Caco-2 (cell line): ENCODE measurements at regions of chr20 and their contacts with region 1.

Region 1: DNA sequence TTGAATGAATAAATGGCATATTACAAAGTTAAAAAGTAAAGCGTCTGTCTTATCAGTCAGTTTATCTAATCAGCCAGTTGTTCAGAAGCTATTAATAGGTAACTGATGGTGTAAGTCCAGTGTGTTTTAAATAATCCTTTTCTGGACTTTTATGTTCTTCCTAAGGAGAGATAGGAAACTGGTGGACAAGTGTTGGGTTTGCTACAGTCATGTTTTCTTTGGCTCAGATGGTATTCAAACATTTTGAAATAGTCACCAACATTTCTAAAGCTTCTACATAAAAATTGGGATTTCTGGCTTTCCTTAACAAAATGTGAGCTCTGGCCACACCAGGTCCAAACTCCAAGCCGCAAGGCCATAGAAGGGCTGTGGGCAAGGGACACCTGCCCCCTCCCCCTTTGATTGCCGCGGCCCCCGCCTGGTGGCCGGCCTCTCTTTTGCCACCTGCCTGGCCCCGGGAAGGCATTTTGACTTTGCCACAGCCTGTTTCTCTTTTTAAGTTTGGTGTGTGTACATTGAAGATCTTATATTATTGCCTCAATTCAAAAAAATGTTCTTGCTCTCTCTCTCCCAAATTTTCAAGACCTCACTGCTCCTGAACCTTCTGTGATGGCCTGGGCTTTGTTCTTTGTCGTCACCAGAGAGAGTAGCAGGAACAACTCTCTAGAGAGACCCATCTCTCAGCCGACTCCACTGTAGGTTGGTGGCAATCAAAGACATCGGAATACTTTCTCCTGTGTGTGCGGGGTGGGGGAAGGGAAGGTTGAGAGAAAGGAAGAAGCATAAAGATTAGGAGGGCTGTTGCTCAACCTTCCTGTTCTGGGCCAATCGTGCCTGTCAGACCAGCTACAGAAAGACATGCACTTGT is 84.0 kb upstream of the ZNF217 start:
- DNase-seq: peak; percentile 97 to 99
- H3K4me3 ChIP-seq: peak overlapping the region; percentile 2; the same call in 1 of the 2 replicates
- H3K4me3 Mint-ChIP-seq: peak overlapping the region; percentile 73
- H3K27ac Mint-ChIP-seq: peak overlapping the region; percentile 88
- H3K4me1 ChIP-seq: peaks cover 52% of the 10 kb centered on the region
- H3K4me1 Mint-ChIP-seq: peaks cover 43% of the 10 kb centered on the region
- H3K27me3 ChIP-seq: no peaks in the 10 kb centered on the region
- H3K27me3 Mint-ChIP-seq: no peaks in the 10 kb centered on the region
- CTCF ChIP-seq: peak; percentile 76 to 84

Region 2: DNA sequence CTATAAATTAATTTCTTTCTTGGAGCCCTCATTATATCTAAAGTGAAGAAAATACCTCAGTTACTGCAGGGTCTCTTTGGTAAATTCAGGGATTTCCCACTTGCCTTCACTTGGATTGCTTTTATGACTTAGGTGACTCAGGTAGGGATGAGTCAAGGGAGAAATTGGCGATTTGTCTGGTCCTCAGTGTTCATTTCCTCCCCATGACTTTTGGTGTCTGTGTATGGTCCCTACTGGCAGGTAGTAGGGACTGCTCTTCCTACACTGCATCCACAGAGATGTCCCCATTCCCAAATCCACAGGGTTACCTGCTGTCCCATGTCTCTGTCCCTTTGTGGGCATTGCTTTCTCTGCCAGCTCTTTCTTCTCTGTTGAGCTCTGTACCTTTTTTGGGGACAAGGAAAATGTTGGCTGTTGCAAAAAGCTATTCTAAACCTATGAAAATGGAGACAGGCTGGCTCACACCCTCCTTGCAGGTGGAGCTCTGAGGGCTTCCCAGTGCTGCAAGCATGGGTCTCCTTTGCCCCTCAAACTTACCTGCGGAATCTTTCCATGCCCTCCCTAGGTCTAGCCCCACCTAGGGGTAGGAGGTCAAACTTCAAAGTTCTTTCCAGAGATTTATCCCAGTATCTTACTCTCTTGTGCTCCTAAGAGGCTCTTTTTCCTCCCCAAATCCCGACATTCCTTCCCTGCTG is 296.0 kb before region 1 on chr20:
- CTCF ChIA-PET with region 1: no interaction called
- POLR2A ChIA-PET with region 1: no interaction called
- intact Hi-C with region 1: no loop called
- DNase-seq: peak in 1 of 2 experiments; percentile 28
- H3K4me3 ChIP-seq: no peak overlapping the region
- H3K4me3 Mint-ChIP-seq: no peak overlapping the region
- H3K27ac Mint-ChIP-seq: no peak overlapping the region
- H3K4me1 ChIP-seq: no peaks in the 10 kb centered on the region
- H3K4me1 Mint-ChIP-seq: no peaks in the 10 kb centered on the region
- H3K27me3 ChIP-seq: no peaks in the 10 kb centered on the region; the same call in 1 of the 2 replicates
- H3K27me3 Mint-ChIP-seq: peaks cover 4% of the 10 kb centered on the region
- CTCF ChIP-seq: peak; percentile 18 to 35

Region 3: DNA sequence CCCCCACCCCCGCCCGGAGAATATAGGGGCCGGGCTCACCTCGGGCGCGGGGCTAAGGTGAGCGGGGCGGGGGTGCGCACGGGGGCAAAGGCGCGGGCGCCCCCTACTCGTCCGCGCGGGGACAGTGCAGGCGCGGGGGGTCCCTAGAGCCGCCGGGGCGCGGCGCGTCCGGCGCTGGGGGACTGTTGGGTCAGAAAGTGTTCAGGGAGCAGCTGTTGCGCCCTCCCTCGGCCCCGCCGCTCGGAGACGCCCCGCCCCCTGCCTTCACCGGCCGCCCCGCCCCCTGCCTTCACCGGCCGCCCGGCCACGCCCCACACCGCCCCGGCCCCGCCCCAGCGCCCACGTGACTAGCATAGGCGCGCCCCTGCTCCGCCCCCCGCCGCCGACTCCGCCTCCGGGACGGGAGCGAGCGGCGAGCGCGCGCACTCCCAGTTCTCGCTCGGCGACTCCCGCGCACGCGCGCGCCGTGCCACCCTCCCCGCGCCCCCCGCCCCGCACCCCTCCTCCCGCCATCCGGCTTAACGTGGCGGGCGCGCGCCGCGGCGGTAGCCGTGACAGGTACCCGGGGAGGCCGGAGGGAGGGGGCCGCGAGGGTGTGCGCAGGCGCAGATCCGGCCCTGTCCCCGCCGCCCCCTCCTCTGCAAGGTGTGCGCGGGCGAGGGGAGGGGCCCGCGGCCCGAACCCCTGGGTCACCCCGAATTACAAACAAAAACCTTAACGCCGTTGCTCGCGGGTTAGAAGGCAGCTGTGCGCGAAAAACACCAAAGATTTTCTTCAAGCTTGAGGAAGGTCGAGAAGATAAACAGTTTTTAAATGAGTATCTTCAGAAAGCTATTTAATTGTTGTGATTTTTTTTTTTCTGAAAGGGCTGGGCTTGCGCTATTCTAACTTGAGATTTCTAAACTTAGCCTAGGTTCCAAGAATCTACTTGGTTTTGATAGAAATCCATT is 83.3 kb before region 1 on chr20:
- CTCF ChIA-PET with region 1: interaction called, 15 read pairs
- POLR2A ChIA-PET with region 1: interaction called, 10 read pairs
- intact Hi-C with region 1: loop called (anchors 1 kb)
- DNase-seq: peak; percentile 99 to 100
- H3K4me3 ChIP-seq: peak overlapping the region; percentile 98
- H3K4me3 Mint-ChIP-seq: peak overlapping the region; percentile 87
- H3K27ac Mint-ChIP-seq: peak overlapping the region; percentile 80
- H3K4me1 ChIP-seq: peaks cover 38% of the 10 kb centered on the region
- H3K4me1 Mint-ChIP-seq: peaks cover 44% of the 10 kb centered on the region
- H3K27me3 ChIP-seq: no peaks in the 10 kb centered on the region
- H3K27me3 Mint-ChIP-seq: no peaks in the 10 kb centered on the region
- CTCF ChIP-seq: peak; percentile 64 to 79

Region 4: DNA sequence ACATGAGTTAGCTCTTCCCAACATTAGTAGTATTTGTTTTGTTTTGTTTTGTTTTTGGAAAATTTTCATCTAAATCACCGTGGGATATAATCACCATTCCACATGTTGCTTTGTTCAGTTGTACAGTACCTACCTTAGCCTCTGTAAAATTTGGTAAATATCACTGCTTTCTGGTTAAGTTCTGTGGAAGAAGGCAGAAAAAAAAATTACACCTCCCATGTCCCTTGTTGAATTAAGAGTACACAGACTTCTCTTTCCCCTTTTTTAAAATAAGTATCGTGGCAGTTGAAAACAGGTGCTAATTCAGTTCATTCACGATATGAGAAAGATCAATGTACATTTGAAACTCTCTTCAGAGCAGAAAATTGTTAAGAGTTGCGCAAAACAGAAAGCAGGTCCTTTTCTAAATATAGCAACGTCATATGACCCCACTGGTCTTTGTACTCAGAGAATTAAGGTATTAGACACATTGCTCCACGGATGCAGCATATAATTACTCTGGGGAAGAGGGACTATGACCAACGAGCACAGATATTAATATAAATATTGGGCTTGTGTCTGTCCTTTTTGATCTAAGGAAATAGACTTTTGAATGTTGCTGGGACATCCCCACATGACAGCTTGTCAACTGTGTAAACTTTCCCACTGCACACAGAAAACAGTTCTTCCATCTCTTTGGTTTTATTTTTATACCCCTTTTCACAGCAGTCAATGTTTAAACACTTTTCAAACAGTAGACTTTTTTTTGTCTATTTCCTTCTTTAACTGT is 25.4 kb before region 1 on chr20:
- CTCF ChIA-PET with region 1: no interaction called
- POLR2A ChIA-PET with region 1: no interaction called
- intact Hi-C with region 1: loop called (anchors 1 kb)
- DNase-seq: peak; percentile 41 to 66
- H3K4me3 ChIP-seq: peak overlapping the region; percentile 14; the same call in 1 of the 2 replicates
- H3K4me3 Mint-ChIP-seq: peak overlapping the region; percentile 61
- H3K27ac Mint-ChIP-seq: peak overlapping the region; percentile 40
- H3K4me1 ChIP-seq: peaks cover 40% of the 10 kb centered on the region
- H3K4me1 Mint-ChIP-seq: peaks cover 35% of the 10 kb centered on the region
- H3K27me3 ChIP-seq: no peaks in the 10 kb centered on the region
- H3K27me3 Mint-ChIP-seq: no peaks in the 10 kb centered on the region
- CTCF ChIP-seq: no peak

Region 5: DNA sequence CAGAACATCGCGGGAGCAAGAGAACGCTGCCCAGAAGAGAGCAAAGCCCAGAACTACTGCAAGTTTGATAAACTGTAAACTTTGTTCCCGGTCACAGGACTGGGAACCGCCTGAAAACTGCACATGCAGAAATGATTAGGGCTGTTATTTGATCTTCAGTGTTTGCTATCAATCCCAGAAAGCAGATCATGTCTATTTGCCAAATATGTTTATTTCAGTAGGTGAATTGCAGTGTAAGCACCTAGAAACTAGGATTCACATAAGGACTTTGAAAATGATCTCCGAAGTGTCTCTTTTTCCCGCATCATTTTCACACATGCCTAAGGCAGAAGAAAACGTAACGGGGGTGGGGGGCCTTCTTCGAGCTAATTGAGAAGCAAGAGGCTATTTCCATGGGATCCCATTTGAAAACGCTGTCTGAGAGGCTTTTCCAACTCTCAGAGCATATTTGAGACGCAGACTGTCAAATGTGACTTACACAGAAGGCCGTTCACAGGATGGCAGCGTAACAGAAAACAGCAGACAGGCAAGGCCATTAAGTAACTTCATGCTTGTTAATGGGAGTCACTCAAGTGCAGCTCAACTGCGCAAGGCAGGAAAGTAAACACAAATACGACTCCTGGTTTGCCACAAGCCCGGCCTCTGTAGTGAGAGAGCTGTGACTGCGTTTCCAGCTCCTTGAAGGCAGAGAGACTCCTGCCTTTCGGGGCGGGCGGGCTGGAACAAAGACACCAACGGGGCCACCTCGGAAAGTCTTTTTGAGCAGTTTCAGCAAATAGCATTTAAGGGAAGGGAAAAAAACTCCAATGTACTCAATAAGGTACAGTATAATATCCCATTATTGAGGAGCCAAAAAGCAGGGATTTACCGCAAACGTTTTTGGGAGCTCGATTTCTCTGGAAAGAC is 60.6 kb after region 1 on chr20:
- CTCF ChIA-PET with region 1: interaction called, 12 read pairs
- POLR2A ChIA-PET with region 1: interaction called, 16 read pairs
- intact Hi-C with region 1: loop called (anchors 1 kb)
- DNase-seq: peak; percentile 94 to 97
- H3K4me3 ChIP-seq: peak overlapping the region; percentile 35
- H3K4me3 Mint-ChIP-seq: peak overlapping the region; percentile 72
- H3K27ac Mint-ChIP-seq: peak overlapping the region; percentile 95
- H3K4me1 ChIP-seq: peaks cover 67% of the 10 kb centered on the region
- H3K4me1 Mint-ChIP-seq: peaks cover 68% of the 10 kb centered on the region
- H3K27me3 ChIP-seq: no peaks in the 10 kb centered on the region
- H3K27me3 Mint-ChIP-seq: no peaks in the 10 kb centered on the region
- CTCF ChIP-seq: no peak

Region 6: DNA sequence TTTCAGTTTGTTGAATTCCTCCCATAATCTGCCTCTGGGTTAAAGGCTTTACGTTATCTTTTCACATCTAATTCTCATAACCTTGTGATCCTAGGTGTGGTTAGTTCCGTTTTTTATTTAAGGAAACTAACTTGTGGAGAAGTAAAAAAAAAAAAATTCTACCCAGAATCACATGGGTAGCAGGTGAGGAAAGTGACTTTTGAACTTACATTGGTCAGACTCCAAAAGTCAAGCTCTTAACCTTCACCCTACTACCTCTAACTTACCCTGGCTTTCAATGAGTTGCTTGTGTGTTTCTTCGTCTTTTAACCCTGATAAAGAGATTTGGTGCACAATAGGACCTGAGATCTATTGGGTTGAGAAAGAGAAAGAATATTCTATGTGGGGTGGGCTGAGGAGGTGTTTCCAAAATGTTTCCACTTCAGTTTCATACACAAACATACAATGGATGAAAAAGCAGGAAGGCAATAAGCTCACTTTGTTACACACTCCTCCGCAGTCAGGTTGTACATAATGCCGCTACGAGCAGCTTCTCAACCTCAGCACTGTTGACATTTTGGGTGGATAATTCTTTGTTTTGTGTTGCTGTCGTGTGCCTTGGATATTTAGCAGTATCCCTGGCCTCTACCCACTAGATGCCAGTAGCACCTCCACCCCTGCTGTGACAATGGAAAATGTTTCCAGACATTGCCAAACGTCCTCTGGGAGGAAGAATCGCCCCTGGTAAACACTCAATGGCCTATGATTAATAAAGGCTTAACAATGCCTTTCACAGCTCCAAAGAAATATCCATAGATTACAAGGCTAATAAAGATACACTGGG is 109.0 kb after region 1 on chr20:
- CTCF ChIA-PET with region 1: interaction called, 8 read pairs
- POLR2A ChIA-PET with region 1: no interaction called
- intact Hi-C with region 1: loop called (anchors 1 kb)
- DNase-seq: peak; percentile 47 to 67
- H3K4me3 ChIP-seq: no peak overlapping the region; the same call in 1 of the 2 replicates
- H3K4me3 Mint-ChIP-seq: peak overlapping the region; percentile 39
- H3K27ac Mint-ChIP-seq: peak overlapping the region; percentile 59
- H3K4me1 ChIP-seq: peaks cover 71% of the 10 kb centered on the region
- H3K4me1 Mint-ChIP-seq: peaks cover 70% of the 10 kb centered on the region
- H3K27me3 ChIP-seq: no peaks in the 10 kb centered on the region
- H3K27me3 Mint-ChIP-seq: no peaks in the 10 kb centered on the region
- CTCF ChIP-seq: peak in 1 of 2 experiments; percentile 13

Region 7: GRCh38 chr20:53915446-53916172 is 237.9 kb after region 1 on chr20:
- CTCF ChIA-PET with region 1: interaction called, 6 read pairs
- POLR2A ChIA-PET with region 1: no interaction called
- intact Hi-C with region 1: loop called (anchors 1 kb)
- DNase-seq: peak; percentile 98
- H3K4me3 ChIP-seq: peak overlapping the region; percentile 68
- H3K4me3 Mint-ChIP-seq: peak overlapping the region; percentile 92
- H3K27ac Mint-ChIP-seq: peak overlapping the region; percentile 82
- H3K4me1 ChIP-seq: peaks cover 10% of the 10 kb centered on the region
- H3K4me1 Mint-ChIP-seq: peaks cover 34% of the 10 kb centered on the region
- H3K27me3 ChIP-seq: no peaks in the 10 kb centered on the region
- H3K27me3 Mint-ChIP-seq: no peaks in the 10 kb centered on the region
- CTCF ChIP-seq: peak; percentile 98 to 99

Region 8: GRCh38 chr20:54312557-54312956 is 634.9 kb after region 1 on chr20:
- CTCF ChIA-PET with region 1: no interaction called
- POLR2A ChIA-PET with region 1: no interaction called
- intact Hi-C with region 1: no loop called
- DNase-seq: no peak
- H3K4me3 ChIP-seq: no peak overlapping the region
- H3K4me3 Mint-ChIP-seq: no peak overlapping the region
- H3K27ac Mint-ChIP-seq: no peak overlapping the region
- H3K4me1 ChIP-seq: no peaks in the 10 kb centered on the region
- H3K4me1 Mint-ChIP-seq: no peaks in the 10 kb centered on the region
- H3K27me3 ChIP-seq: no peaks in the 10 kb centered on the region
- H3K27me3 Mint-ChIP-seq: peaks cover 28% of the 10 kb centered on the region
- CTCF ChIP-seq: no peak